ENCODE measurements at regions of chr9 and their contacts with region 1.

Region 1: GRCh38 chr9:107744873-107745272 is 255.3 kb upstream of the KLF4 start:
- DNase-seq: no peak
- ATAC-seq: peak; percentile 44
- H3K4me3 ChIP-seq: no peak overlapping the region
- H3K27ac ChIP-seq: no peak overlapping the region
- H3K4me1 ChIP-seq: no peaks in the 10 kb centered on the region
- H3K27me3 ChIP-seq: no peaks in the 10 kb centered on the region
- CTCF ChIP-seq: no peak
- EP300 ChIP-seq: no peak
- POLR2A ChIP-seq: no peak
- RAD21 ChIP-seq: no peak

Region 2: DNA sequence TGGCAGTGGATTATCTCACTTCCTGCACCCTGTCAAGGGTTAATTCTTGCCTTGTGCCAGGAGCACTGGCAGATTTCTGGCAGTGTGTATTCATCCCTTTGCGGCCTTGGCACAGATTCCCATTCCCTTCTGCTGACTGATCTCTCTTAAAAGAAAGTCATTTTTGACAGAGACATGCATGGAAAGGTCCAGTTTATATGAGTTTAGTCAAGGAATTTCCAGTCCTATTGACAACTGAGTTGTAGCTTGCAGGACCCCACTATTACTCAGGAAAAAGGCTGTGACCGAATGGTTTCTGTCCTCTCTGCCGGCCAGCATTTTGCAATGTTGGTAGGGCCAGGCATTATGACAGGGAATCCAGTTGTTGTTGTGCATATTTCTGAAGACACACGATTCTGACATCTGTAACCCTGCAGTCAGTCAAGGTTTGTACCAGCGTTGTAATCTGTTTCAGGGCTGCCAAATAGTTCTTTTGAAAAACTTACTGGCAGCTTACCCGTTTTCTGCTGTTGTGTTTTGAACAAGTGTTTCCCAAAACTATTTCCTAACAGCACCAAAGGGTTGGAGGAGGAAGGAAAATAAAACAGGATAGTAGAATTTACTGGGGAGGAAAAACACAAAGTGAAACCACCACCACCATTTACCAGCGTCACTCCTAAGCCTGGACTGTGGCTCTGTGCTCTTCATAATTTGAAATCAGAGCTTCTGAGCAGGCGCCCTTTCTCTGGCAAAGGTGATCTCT is 11.9 kb before region 1 on chr9:
- CTCF ChIA-PET with region 1: interaction called, 4 read pairs
- POLR2A ChIA-PET with region 1: interaction called, 4 read pairs
- RAD21 ChIA-PET with region 1: interaction called, 6 read pairs
- SMC1A ChIA-PET with region 1: interaction called, 12 read pairs
- in situ Hi-C with region 1: no loop called
- intact Hi-C with region 1: no loop called
- DNase-seq: no peak
- ATAC-seq: peak; percentile 30; the same call in 2 of the 3 replicates
- H3K4me3 ChIP-seq: no peak overlapping the region
- H3K27ac ChIP-seq: no peak overlapping the region
- H3K4me1 ChIP-seq: no peaks in the 10 kb centered on the region
- H3K27me3 ChIP-seq: no peaks in the 10 kb centered on the region
- CTCF ChIP-seq: no peak
- EP300 ChIP-seq: no peak
- POLR2A ChIP-seq: no peak
- RAD21 ChIP-seq: no peak